ENCODE measurements at regions of chr11 and their contacts with region 1.

Region 1: GRCh38 chr11:61792310-61793085 is at the starts of genes FEN1 and TMEM258:
- DNase-seq: peak; percentile 95
- H3K4me3 Mint-ChIP-seq: peak within 1 kb of the TSS; percentile 81
- H3K27ac Mint-ChIP-seq: peak within 1 kb of the TSS; percentile 98
- H3K4me1 Mint-ChIP-seq: peaks cover 11% of the 10 kb centered on the region
- H3K27me3 Mint-ChIP-seq: no peaks in the 10 kb centered on the region
- CTCF ChIP-seq: no peak
- total RNA-seq, gene FEN1: 19.9 and 21.5 TPM in 2 replicates
- total RNA-seq, gene TMEM258: 184 and 300 TPM in 2 replicates

Region 2: GRCh38 chr11:61747192-61747966 is 45.1 kb before region 1 on chr11:
- CTCF ChIA-PET with region 1: interaction called, 10 read pairs
- POLR2A ChIA-PET with region 1: no interaction called
- intact Hi-C with region 1: no loop called
- DNase-seq: peak; percentile 69
- H3K4me3 Mint-ChIP-seq: no peak overlapping the region
- H3K27ac Mint-ChIP-seq: no peak overlapping the region
- H3K4me1 Mint-ChIP-seq: no peaks in the 10 kb centered on the region
- H3K27me3 Mint-ChIP-seq: no peaks in the 10 kb centered on the region
- CTCF ChIP-seq: peak; percentile 84

Region 3: GRCh38 chr11:61871158-61871597 is 78.7 kb after region 1 on chr11:
- CTCF ChIA-PET with region 1: interaction called, 32 read pairs
- POLR2A ChIA-PET with region 1: interaction called, 4 read pairs
- intact Hi-C with region 1: loop called (anchors 1 kb)
- DNase-seq: peak; percentile 78
- H3K4me3 Mint-ChIP-seq: no peak overlapping the region
- H3K27ac Mint-ChIP-seq: no peak overlapping the region
- H3K4me1 Mint-ChIP-seq: peaks cover 18% of the 10 kb centered on the region
- H3K27me3 Mint-ChIP-seq: no peaks in the 10 kb centered on the region
- CTCF ChIP-seq: peak; percentile 97

Region 4: DNA sequence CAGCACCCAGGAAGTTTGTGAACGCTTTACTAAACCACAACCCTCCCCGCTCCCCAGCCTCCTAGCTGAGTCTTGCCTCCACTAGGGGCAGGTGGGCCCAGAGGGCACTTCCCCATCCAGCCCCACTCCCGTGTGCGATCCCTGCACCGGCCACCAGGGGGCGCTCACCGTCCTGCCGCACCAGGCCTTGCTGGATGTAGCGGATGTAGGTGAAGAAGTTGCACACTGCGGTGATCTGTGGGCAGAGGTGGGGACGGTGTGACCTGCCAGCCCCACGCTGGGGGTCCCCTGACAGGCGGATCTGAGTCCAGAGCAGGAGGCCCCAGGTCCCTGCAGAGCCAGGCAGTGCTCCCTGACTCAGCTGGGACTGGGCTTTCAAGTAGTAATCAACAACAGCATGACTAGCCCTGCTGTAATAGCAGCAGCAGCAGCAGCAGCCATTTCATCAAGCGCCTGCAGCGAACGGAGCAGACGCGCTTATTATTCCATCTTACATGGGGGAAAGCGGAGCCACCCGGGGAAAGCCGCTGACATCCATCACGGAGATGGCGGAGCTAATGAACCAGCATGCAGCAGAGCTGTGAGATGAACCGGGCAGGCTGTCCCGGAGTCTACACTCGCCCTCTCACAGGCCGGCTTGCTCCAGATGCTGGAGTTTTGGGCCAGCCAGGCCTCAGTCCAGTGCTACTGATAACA is 106.8 kb after region 1 on chr11:
- CTCF ChIA-PET with region 1: interaction called, 148 read pairs
- POLR2A ChIA-PET with region 1: interaction called, 3 read pairs
- intact Hi-C with region 1: loop called (anchors 1 kb)
- DNase-seq: peak; percentile 76
- H3K4me3 Mint-ChIP-seq: no peak overlapping the region
- H3K27ac Mint-ChIP-seq: no peak overlapping the region
- H3K4me1 Mint-ChIP-seq: peaks cover 1% of the 10 kb centered on the region
- H3K27me3 Mint-ChIP-seq: no peaks in the 10 kb centered on the region
- CTCF ChIP-seq: peak; percentile 100

Region 5: GRCh38 chr11:61967116-61967923 is 174.8 kb after region 1 on chr11 and contains the start of gene FTH1:
- CTCF ChIA-PET with region 1: interaction called, 4 read pairs
- POLR2A ChIA-PET with region 1: interaction called, 15 read pairs
- intact Hi-C with region 1: no loop called
- DNase-seq: peak; percentile 90
- H3K4me3 Mint-ChIP-seq: peak within 1 kb of the TSS; percentile 90
- H3K27ac Mint-ChIP-seq: peak within 1 kb of the TSS; percentile 97
- H3K4me1 Mint-ChIP-seq: peaks cover 58% of the 10 kb centered on the region
- H3K27me3 Mint-ChIP-seq: no peaks in the 10 kb centered on the region
- CTCF ChIP-seq: no peak
- total RNA-seq, gene FTH1: 8,367 and 15,492 TPM in 2 replicates

Region 6: GRCh38 chr11:62061351-62062222 is 269.1 kb after region 1 on chr11:
- CTCF ChIA-PET with region 1: interaction called, 44 read pairs
- POLR2A ChIA-PET with region 1: interaction called, 7 read pairs
- intact Hi-C with region 1: no loop called
- DNase-seq: peak; percentile 32
- H3K4me3 Mint-ChIP-seq: no peak overlapping the region
- H3K27ac Mint-ChIP-seq: no peak overlapping the region
- H3K4me1 Mint-ChIP-seq: no peaks in the 10 kb centered on the region
- H3K27me3 Mint-ChIP-seq: no peaks in the 10 kb centered on the region
- CTCF ChIP-seq: peak; percentile 38

Region 7: GRCh38 chr11:62108017-62108750 is 315.7 kb after region 1 on chr11:
- CTCF ChIA-PET with region 1: interaction called, 96 read pairs
- POLR2A ChIA-PET with region 1: no interaction called
- intact Hi-C with region 1: loop called (anchors 1 kb)
- DNase-seq: peak; percentile 69
- H3K4me3 Mint-ChIP-seq: no peak overlapping the region
- H3K27ac Mint-ChIP-seq: no peak overlapping the region
- H3K4me1 Mint-ChIP-seq: no peaks in the 10 kb centered on the region
- H3K27me3 Mint-ChIP-seq: no peaks in the 10 kb centered on the region
- CTCF ChIP-seq: peak; percentile 79

Measured in MCF 10A (cell line).